CD14-positive monocyte (primary cell): ENCODE measurements at regions of chr6 and their contacts with region 1.

Region 1: DNA sequence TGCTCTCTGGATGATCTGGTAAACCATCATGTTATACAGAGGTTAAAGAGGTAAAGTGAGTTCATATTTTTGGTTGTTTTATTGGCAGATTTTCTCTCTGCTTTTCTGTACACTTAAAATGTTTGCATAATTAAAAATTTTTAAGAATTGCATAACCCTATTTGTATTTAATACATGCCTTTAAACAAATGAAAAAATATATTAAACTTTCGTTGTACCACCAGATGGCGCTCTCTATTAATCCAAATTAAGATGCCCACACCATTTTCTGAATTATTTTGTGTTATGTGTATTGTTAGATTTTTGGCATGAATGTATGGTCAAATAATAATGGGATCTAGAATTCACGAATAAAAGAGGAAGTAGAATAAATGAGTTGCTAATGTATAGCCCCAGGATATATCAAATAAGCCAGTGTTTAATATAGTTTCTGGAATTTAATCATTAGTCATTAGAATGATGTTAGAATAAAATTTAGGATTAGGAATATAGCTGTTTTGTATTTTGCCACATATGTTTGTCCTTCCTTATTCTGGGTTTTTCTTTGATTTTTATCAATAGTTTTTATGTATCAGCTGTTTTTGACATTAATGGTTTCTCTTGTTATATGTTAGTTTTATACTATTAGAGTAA is 38.9 kb downstream of the SMAP1 start:
- DNase-seq: peak; percentile 7 to 42 (median 33)
- H3K4me3 ChIP-seq: no peak overlapping the region
- H3K4me3 Mint-ChIP-seq: no peak overlapping the region
- H3K27ac ChIP-seq: no peak overlapping the region
- H3K27ac Mint-ChIP-seq: no peak overlapping the region
- H3K4me1 ChIP-seq: peaks cover 0 to 5% of the 10 kb centered on the region in 2 donors
- H3K4me1 Mint-ChIP-seq: peaks cover 14% of the 10 kb centered on the region
- H3K27me3 ChIP-seq: no peaks in the 10 kb centered on the region
- H3K27me3 Mint-ChIP-seq: no peaks in the 10 kb centered on the region
- CTCF ChIP-seq: peak; percentile 82

Region 2: DNA sequence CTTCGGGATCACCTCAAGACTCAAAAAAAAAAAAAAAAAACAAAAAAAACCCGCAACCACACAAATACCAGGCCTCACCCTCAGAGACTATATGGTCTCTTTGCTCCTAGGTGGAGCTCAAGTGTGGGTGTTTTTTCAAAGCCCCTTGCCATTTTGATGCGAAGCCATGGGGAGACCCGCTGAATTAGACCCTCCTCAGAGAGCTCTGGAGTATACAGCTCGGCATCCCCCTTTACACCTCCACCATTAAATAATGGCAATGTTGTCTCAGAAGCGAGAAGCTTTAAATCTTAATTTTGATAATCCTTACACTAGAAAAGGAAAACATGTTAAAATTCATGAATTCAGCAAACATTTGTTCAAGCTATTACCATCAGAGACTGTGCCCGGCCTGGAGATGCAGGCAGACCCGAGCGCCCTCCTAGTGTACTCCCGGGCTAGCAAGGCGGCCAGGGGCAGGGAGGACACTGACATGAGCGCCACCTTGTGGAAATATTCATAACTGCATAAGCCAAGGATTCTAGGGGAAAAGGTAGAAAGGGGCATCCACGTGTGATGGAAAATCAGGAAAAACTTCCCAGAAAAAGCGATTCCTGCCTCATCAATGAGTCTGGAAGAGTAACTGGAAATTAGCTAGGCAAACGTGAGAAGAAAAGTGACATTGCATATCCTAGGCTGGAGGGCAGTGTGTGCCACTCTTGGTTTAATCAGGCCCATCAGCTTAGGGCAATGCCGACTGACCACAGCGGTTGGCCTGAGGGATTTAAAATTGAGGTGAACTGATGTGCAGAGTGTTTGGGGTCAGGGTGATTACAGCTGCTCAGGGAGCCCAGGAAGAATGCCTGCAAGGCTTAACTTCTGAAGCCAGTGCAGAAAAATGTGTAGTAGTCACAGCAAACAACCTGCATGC is 177.7 kb after region 1 on chr6:
- intact Hi-C with region 1: loop called (anchors 5 to 10 kb)
- DNase-seq: peak; percentile 17 to 41 (median 33)
- H3K4me3 ChIP-seq: no peak overlapping the region
- H3K4me3 Mint-ChIP-seq: no peak overlapping the region
- H3K27ac ChIP-seq: no peak overlapping the region
- H3K27ac Mint-ChIP-seq: no peak overlapping the region
- H3K4me1 ChIP-seq: no peaks in the 10 kb centered on the region
- H3K4me1 Mint-ChIP-seq: no peaks in the 10 kb centered on the region
- H3K27me3 ChIP-seq: no peaks in the 10 kb centered on the region
- H3K27me3 Mint-ChIP-seq: peaks cover 2 to 5% (median 5%) of the 10 kb centered on the region in 3 donors
- CTCF ChIP-seq: peak; percentile 88

Region 3: DNA sequence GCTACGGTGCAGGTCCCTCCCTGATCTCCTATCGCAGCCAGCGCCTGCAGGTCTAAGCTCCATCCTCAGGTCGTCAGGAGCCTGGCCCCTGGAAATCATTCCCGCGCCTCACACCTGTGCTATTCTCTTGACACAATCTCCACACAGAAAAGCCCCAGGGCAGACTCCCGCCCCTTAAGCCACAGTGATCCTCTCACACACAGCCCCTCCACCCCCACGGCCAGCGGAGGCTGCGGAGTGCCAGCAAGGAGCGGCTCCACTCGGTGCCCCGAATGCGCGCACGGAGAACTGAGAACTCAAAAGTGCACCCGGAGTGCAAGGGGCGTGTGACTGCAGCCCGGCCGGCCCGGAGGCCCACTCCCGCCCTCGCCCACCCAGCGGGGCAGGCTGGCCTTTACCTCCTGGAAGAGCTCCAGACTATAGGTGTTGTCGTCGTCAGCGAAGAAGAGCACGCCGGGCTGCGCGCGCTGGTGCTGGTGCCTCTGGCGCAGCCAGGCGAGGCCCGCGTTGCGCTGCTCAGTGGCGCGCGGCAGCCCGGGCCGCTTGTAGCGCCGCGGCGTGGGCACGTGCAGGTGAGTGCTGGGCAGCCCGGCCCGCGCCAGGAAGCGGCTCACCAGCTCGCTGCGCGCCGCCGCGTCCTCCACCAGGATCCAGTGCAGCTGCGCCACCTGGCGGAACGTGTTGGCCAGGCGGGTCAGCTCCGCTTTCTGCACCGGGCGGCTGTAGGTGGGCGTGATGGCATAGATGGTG is 249.0 kb after region 1 on chr6:
- intact Hi-C with region 1: loop called in 1 of 2 experiments (anchors 10 kb)
- DNase-seq: peak; percentile 38 to 54 (median 42)
- H3K4me3 ChIP-seq: peak overlapping the region in 2 of 3 experiments; percentile 3 to 73
- H3K4me3 Mint-ChIP-seq: peak overlapping the region; percentile 61 to 89
- H3K27ac ChIP-seq: no peak overlapping the region
- H3K27ac Mint-ChIP-seq: no peak overlapping the region
- H3K4me1 ChIP-seq: peaks cover 16 to 20% of the 10 kb centered on the region in 2 donors
- H3K4me1 Mint-ChIP-seq: peaks cover 13% of the 10 kb centered on the region
- H3K27me3 ChIP-seq: peaks cover 49 to 82% of the 10 kb centered on the region in 2 donors
- H3K27me3 Mint-ChIP-seq: peaks cover 67 to 82% (median 68%) of the 10 kb centered on the region in 3 donors
- CTCF ChIP-seq: peak; percentile 93